ENCODE measurements at regions of chr12 and their contacts with region 1.

Region 1: DNA sequence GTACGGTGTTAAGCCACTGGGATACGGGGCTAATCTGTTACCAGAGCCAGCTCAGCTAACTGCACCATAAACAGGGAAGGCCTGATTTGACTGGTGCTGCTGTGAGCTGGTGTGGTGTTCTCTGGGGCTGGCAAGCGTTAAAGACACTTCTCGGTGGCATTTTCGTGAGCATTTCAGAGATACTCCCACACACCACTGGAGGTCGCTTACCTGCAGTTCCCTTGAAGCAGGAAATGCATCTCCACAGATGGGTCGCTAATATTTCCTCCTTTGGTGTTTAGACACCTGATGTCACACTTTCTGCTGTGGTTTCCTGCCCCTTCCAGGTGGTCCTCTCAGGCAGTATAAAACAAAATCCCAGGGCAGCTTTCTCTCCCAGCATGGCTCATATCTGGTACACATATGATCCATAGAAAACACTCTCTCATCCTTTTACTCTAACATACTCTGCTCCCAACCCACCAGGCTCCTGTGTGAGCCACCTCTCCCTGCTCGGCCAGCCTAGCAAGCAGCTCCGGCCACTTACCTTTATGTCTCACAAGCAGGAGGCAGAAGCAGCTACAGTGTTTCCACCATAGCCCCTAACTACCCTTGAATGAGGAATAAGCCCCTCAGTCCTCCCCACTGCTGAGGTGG is 129.9 kb upstream of the GRIN2B start:
- DNase-seq: no peak
- ATAC-seq: no peak
- H3K4me3 ChIP-seq: no peak overlapping the region
- H3K27ac ChIP-seq: no peak overlapping the region
- H3K4me1 ChIP-seq: no peaks in the 10 kb centered on the region
- H3K27me3 ChIP-seq: peaks cover 0 to 6% (median 0%) of the 10 kb centered on the region in 9 donors
- CTCF ChIP-seq: no peak
- POLR2A ChIP-seq: no peak

Region 2: GRCh38 chr12:14126692-14127091 is 15.3 kb after region 1 on chr12:
- intact Hi-C with region 1: loop called in 1 of 10 experiments (anchors 1 kb)
- DNase-seq: no peak
- ATAC-seq: no peak
- H3K4me3 ChIP-seq: no peak overlapping the region
- H3K27ac ChIP-seq: no peak overlapping the region
- H3K4me1 ChIP-seq: no peaks in the 10 kb centered on the region
- H3K27me3 ChIP-seq: no peaks in the 10 kb centered on the region
- CTCF ChIP-seq: no peak
- POLR2A ChIP-seq: no peak